ENCODE measurements at regions of chr6 and their contacts with region 1.

Region 1: DNA sequence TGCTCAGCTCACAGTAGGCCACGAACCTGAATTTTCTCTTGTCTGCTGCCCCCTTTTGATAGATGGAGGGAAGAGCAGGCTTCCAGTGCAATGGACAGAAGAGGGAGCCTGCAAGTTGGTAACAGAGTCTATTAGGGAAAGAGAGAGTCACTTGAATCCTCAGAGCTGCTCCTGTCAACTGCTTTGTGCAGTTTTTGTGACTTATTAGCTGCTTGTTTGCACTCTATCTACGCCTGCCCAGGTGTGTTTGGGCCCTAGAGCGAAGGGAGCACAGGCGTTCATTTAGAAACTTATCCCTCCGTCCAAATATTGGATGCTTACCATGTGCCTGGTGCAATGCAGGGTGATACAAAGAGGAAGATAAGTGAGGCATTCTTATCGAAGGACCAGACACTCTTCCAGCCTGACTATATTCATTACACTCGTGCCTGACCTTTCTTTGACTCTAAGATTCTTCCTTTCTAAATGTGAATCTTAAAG is 11.6 kb upstream of the SLC2A12 start:
- DNase-seq: peak; percentile 75
- H3K4me3 ChIP-seq: no peak overlapping the region
- H3K27ac ChIP-seq: no peak overlapping the region
- H3K4me1 ChIP-seq: no peaks in the 10 kb centered on the region
- H3K27me3 ChIP-seq: no peaks in the 10 kb centered on the region
- CTCF ChIP-seq: peak; percentile 78

Region 2: DNA sequence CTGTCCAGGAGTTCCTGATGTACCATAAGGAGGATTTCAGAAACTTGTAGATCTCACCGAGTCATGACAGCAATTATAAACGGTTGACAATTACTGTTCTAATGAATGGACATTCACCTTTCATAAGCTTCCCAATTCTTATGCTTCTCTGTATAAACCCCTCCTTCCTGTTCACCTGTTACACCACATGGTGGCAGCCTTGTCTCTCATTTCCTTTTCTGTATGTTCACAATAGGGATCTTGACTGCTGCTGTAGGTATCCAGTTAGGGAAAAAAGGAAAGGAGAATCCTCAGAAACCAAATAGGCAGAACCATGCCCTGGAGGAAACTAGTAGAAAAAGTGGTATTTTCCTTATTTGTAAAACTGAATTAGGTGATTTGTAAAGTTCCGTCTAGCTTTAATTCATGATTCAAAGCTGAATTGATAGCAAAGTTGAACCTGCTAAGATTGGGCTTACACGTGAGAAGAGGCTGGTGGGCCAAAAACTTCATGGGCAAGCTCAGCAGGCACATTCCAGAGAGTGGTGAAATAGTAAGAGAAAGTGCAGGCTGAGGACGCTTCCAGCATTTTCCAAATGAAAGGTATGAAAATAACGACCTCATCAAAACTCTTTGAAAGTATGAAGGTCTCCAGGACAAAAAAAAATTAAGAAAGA is 139.9 kb before region 1 on chr6:
- intact Hi-C with region 1: loop called (anchors 2 kb)
- DNase-seq: peak; percentile 75
- H3K4me3 ChIP-seq: no peak overlapping the region
- H3K27ac ChIP-seq: no peak overlapping the region
- H3K4me1 ChIP-seq: no peaks in the 10 kb centered on the region
- H3K27me3 ChIP-seq: no peaks in the 10 kb centered on the region
- CTCF ChIP-seq: peak; percentile 85

Region 3: DNA sequence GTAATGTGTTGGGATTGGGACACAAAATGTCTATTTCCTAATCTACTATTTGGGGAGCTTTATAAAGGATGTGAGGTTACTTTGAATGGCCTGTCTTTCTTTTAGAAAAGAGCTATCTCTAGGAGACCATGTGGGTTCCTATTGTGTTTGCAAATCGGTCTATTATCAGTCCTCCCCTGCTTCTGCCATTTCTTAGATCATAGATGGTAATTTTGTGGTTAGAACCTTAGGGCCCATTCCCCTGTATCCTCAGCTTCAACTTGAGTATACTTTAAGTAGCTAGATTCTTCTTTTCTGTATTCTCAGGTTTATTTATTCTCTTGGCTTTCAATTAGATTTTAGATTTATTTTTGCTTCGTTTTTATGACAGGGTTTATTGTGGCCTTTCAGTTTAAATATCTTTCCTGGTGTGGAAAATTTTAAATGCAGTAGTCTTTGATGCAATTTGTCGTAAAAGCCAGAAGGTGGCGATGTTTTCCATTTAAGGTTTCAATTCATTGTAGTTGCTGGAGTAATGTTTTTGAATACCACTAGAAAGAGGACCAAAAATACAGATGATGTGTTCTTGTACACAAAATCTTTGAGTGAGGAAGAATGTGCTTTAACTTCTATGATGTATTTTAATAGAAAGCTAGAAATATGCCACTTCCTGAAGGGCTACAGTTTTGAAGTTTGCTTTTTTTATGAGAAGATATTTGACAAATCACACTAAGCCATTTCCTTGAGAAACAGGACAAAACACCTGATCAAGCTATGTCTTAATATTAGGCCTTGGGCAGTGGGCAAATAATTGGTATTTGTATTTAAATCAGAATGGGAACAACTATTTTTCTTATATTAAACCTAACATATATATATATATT is 90.7 kb before region 1 on chr6:
- intact Hi-C with region 1: loop called (anchors 2 kb)
- DNase-seq: no peak
- H3K4me3 ChIP-seq: no peak overlapping the region
- H3K27ac ChIP-seq: no peak overlapping the region
- H3K4me1 ChIP-seq: no peaks in the 10 kb centered on the region
- H3K27me3 ChIP-seq: no peaks in the 10 kb centered on the region
- CTCF ChIP-seq: peak; percentile 67

Measured in colonic mucosa (tissue), 4 donors.